Activated B cell treated with CpG ODN at 0.5 μM for 24 hours (primary cell): ENCODE measurements at regions of chr2 and their contacts with region 1.

Region 1: DNA sequence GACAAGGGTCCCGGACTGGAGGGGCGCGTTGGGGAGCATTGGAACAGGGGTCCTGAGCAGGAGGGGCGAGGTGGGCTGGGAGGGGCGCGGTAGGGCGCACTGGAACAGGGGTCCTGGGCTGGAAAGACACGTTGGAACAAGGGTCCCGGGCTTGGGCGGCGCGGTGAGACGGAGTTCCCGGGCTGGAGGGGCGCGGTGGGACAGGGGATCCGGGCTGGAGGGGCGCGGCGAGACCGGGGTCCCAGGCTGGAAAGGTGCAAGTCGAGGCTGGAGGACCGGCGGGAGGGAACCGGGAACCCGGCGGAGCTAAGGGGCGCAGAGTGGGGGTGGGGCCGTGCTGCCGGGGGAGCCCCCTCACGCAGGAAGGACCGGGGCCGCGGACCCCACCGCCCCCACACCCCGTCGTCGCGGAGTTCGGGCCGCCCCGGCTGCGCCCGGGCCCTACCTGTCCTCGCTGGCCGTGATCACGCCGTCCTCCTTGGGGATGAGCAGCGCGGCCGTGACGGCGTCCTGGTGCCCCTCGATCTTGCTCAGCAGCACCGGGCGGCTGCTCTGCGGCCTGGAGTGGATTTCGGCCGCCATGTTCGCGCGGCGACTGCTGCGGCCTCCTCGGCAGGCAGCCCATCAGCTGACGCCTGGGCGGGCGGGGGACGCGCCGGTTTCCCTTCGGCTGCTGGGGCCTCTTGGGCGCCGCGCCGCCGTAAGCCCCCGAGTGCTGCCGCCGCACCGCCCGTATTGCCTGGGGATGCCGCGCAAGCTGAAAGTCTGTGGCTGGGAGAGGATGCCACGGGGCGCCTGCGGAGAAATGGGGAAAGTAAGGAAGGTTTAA is at the start of gene WDFY1:
- DNase-seq: peak; percentile 80
- ATAC-seq: peak; percentile 94
- H3K4me3 Mint-ChIP-seq: peak within 1 kb of the TSS; percentile 95
- H3K27ac Mint-ChIP-seq: peak within 1 kb of the TSS; percentile 88
- H3K4me1 Mint-ChIP-seq: peaks cover 58% of the 10 kb centered on the region
- H3K27me3 Mint-ChIP-seq: no peaks in the 10 kb centered on the region
- CTCF ChIP-seq: no peak
- total RNA-seq, gene WDFY1: 67.2 and 77.0 TPM in 2 replicates

Region 2: DNA sequence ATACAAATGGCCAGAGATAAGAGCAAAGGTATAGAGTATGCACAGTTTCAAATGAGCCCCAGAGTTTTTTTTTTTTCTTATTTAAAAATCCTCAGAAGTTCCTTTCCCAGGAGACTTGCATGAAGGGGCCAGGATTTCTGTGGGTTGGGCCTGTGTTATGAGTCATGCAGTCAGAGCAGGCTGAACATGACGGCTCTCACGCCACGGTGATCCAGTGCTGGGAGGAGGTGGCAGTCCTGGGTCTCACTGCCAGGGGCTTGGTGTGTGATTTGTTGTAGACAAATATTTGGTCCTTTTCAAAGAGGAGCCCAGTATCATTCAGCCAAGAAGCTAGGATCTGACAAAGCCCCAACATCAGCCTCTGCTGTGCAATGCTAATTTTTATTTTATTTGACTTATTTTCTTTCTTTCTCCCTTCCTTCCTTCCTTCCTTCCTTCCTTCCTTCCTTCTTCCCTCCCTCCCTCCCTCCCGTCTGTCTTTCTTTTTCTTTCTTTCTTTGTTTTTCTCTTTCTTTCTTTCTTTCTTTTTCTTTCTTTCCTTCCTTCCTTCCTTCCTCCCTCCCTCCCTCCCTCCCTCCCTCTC is 903.3 kb before region 1 on chr2:
- CTCF ChIA-PET with region 1: no interaction called
- POLR2A ChIA-PET with region 1: no interaction called
- intact Hi-C with region 1: no loop called
- DNase-seq: no peak
- ATAC-seq: no peak
- H3K4me3 Mint-ChIP-seq: no peak overlapping the region
- H3K27ac Mint-ChIP-seq: no peak overlapping the region
- H3K4me1 Mint-ChIP-seq: no peaks in the 10 kb centered on the region
- H3K27me3 Mint-ChIP-seq: peaks cover 9% of the 10 kb centered on the region
- CTCF ChIP-seq: no peak

Region 3: GRCh38 chr2:223768179-223768578 is 176.7 kb before region 1 on chr2:
- CTCF ChIA-PET with region 1: no interaction called
- POLR2A ChIA-PET with region 1: no interaction called
- intact Hi-C with region 1: no loop called
- DNase-seq: no peak
- ATAC-seq: no peak
- H3K4me3 Mint-ChIP-seq: no peak overlapping the region
- H3K27ac Mint-ChIP-seq: no peak overlapping the region
- H3K4me1 Mint-ChIP-seq: no peaks in the 10 kb centered on the region
- H3K27me3 Mint-ChIP-seq: no peaks in the 10 kb centered on the region
- CTCF ChIP-seq: no peak

Region 4: DNA sequence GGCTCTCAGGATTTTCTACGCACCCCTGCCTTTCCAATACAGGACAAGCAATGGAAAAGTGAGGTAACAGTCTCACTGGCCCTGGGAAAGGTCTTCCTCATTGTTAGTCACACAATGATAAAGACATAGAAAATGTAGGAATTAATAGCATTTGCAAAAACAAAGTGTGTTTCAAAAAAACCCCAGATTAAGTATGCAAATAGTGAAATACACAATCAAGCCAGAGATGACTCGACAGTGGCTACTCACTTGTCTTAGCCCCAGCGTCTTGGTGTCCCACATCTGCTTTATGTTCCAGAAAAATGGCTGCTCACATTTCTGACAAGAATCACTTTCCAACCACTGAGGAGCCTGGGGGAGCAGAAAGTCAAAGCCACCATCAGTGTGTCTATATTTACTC is 60.5 kb before region 1 on chr2:
- CTCF ChIA-PET with region 1: no interaction called
- POLR2A ChIA-PET with region 1: interaction called, 3 read pairs
- intact Hi-C with region 1: loop called (anchors 2 kb)
- DNase-seq: no peak
- ATAC-seq: peak; percentile 78
- H3K4me3 Mint-ChIP-seq: peak overlapping the region; percentile 3
- H3K27ac Mint-ChIP-seq: peak overlapping the region; percentile 79
- H3K4me1 Mint-ChIP-seq: peaks cover 42% of the 10 kb centered on the region
- H3K27me3 Mint-ChIP-seq: no peaks in the 10 kb centered on the region
- CTCF ChIP-seq: no peak